AG04449 (cell line): ENCODE measurements at regions of chr3 and their contacts with region 1.

Region 1: DNA sequence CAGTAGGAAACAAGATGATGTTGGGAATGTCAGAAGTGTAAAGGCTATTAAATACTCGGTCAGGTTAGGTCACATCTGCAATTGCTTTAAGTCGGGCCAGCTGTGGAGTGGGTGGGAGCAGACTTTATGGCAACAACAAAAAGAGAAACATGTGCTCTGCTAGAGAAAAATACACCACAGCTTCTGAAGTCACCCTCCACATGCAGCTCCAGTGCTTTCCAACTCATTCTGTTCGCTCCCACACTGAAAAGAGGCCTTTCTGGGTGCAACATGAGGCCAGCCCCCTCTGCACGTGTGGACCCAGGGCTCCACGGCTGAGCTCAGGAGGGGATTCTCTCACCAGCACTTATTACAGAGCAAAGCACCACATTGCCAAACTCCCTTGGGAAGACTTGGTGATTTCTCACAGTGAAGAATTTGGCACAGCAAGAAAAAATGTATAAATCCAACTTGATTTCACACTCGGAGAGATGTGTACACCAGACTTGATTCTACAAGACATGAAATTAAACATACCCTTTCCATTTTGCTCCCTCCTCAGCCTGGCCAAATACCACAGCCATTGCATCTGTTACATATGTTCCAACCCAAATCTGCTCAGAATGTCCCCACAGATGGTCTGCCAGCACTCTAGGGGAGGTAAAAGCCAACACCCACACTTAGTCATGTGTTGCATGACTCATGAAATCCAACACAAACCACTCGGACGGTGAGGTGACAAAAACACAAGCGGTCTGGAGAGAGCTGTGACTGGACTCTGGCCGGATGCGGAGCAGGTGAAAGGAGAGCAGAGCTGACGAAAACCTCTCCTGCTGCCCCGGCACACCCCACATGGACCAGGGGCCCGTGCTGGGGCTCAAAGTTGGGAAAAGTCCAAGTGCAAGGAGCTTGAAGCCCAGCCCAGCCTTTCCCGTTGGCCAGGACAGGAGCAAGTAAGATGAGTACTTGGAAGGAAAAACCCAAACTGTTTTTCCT is 74.6 kb downstream of the ITGB5 start:
- DNase-seq: peak; percentile 94
- H3K4me3 ChIP-seq: peak overlapping the region; percentile 33
- CTCF ChIP-seq: no peak

Region 2: GRCh38 chr3:124741027-124741426 is 71.6 kb before region 1 on chr3:
- CTCF ChIA-PET with region 1: no interaction called
- POLR2A ChIA-PET with region 1: no interaction called
- DNase-seq: no peak
- H3K4me3 ChIP-seq: no peak overlapping the region
- CTCF ChIP-seq: no peak

Region 3: GRCh38 chr3:124826703-124827102 is 14.1 kb after region 1 on chr3:
- CTCF ChIA-PET with region 1: interaction called, 10 read pairs
- POLR2A ChIA-PET with region 1: no interaction called
- DNase-seq: peak; percentile 60
- H3K4me3 ChIP-seq: no peak overlapping the region
- CTCF ChIP-seq: no peak